Activated naive CD4-positive, alpha-beta T cell treated with anti-CD3 and anti-CD28 coated beads for 36 hours (primary cell): ENCODE measurements at regions of chr7 and their contacts with region 1.

Region 1: DNA sequence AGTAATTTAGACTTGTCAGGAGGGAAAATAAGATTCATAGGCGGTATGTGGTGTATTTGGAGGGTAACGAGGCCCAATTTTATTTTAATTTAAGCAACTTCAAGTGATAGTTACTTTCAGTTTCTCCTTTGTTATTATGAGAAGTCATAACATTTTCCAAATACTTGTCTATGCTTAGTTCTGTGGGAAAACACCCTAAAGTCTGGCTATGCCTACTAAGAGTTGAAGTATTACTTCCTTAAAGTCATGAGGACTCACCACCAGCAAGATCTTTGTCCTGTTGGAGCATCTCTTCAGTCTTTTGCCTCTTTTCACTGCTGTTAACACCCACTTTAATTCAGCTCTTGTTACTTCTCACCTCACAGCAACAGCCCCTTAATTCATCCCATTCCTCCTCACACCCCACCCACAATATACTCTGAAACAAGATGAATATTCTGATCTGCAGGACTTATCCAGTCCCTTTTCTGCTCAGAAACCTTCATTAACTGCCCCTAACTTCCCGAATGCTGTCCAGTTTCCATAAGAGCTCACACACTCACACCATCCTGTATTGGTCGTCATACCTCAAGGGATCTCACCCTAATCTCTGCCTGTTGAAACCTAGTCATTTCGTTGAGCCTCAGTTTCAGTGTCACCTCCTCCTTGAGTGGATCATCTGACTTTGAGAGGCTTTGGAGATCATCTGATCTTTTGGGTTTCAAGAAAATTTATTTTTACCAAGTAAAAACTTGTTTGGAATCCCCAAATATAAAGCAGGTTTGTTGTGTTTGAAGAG is 61.3 kb downstream of the DNAH11 start:
- DNase-seq: no peak
- H3K4me3 Mint-ChIP-seq: no peak overlapping the region
- H3K27ac Mint-ChIP-seq: peak overlapping the region; percentile 60
- H3K4me1 Mint-ChIP-seq: peaks cover 17% of the 10 kb centered on the region
- H3K27me3 Mint-ChIP-seq: peaks cover 2% of the 10 kb centered on the region

Region 2: DNA sequence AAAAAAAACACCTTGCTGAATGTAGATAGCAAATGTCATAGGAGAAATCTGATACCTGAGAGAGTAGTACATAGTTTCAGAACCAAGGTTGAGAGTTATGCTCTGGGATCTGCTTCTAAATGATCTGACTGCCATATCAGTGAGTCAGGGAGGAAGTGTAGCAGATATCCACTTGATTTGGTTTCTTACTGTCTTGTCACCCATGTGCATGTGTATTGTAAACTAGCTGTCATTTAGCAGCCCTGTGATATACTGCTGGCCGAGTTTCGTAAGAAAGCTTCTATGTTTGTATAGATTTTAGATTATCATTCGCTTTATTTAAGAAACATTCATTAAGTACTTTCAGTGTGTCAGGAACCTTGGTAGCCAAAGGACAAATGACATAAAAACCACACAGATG is 134.3 kb before region 1 on chr7:
- CTCF ChIA-PET with region 1: no interaction called
- intact Hi-C with region 1: no loop called
- DNase-seq: no peak
- H3K4me3 Mint-ChIP-seq: no peak overlapping the region
- H3K27ac Mint-ChIP-seq: no peak overlapping the region
- H3K4me1 Mint-ChIP-seq: peaks cover 18% of the 10 kb centered on the region
- H3K27me3 Mint-ChIP-seq: no peaks in the 10 kb centered on the region

Region 3: DNA sequence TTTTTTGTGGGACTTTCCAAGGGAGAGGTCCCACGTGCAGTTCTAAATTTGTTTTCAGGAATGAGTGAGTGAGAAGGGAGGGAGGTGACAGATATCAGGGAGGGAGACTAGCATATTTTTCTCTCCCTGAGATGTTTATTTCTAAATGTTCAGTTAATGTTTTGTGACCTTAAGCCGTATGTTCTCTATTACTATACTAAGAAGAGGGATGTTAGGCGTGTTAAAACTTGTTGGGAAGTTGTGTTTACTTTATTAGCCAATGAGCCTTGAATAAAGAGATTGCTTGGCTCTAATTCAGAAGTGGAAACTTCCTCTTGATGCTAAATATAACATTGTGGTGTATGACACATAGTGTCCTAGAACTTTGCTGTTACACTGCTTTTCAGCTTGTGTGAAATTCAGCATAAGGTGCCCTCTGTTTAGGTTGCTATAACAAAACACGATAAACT is 24.1 kb before region 1 on chr7:
- CTCF ChIA-PET with region 1: no interaction called
- intact Hi-C with region 1: loop called (anchors 1 kb)
- DNase-seq: no peak
- H3K4me3 Mint-ChIP-seq: no peak overlapping the region
- H3K27ac Mint-ChIP-seq: peak overlapping the region; percentile 38
- H3K4me1 Mint-ChIP-seq: peaks cover 8% of the 10 kb centered on the region
- H3K27me3 Mint-ChIP-seq: peaks cover 4% of the 10 kb centered on the region

Region 4: DNA sequence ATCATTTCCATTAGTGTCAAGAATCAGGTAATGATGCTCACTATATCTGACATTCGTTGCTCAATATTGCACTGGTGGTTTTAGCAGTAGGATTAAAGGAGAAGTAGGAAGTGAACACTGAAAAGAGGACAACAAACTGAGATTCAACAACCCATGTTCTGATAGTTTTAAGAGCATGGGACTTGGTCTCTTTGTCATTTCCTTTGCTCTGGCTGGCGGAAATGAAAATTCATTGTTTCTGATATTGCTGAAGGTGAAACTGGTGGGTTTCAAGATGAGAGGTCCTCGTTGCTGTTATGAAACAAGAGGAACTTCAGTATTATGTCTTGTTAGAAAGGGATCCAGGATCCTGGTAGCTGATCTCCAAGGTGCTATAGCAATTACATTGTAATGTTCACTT is 67.7 kb after region 1 on chr7:
- CTCF ChIA-PET with region 1: no interaction called
- intact Hi-C with region 1: loop called (anchors 1 kb)
- DNase-seq: peak; percentile 4
- H3K4me3 Mint-ChIP-seq: no peak overlapping the region
- H3K27ac Mint-ChIP-seq: no peak overlapping the region
- H3K4me1 Mint-ChIP-seq: peaks cover 6% of the 10 kb centered on the region
- H3K27me3 Mint-ChIP-seq: no peaks in the 10 kb centered on the region